CD4-positive, alpha-beta memory T cell (primary cell): ENCODE measurements at regions of chr3 and their contacts with region 1.

Region 1: DNA sequence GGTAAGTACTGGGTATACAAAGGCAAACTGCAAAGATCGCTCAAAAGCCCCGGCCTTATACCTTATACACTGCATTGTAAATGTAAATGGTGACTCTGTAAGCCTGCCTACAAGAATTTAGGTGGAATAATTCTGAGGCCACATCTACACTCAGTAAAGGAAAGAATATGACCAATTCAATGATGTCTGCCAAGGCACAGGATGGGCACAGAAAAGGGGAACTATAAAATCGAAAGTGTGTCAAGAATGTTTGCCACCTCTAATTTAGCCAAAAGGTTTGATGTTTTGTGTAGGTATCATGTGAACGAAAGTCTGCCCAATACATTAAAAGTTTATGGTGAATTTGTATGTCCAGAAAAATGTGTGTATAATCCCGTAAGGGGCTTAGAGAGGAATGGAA is 96.1 kb downstream of the FOXP1 start:
- DNase-seq: no peak
- H3K4me3 ChIP-seq: peak overlapping the region in 1 of 2 donors; percentile 34
- H3K4me3 Mint-ChIP-seq: peak overlapping the region; percentile 80 to 91 (median 86)
- H3K27ac ChIP-seq: peak overlapping the region; percentile 69
- H3K27ac Mint-ChIP-seq: peak overlapping the region; percentile 86 to 97 (median 96)
- H3K4me1 ChIP-seq: peaks cover 96% of the 10 kb centered on the region
- H3K4me1 Mint-ChIP-seq: peaks cover 51 to 92% (median 73%) of the 10 kb centered on the region in 4 donors
- H3K27me3 ChIP-seq: no peaks in the 10 kb centered on the region
- H3K27me3 Mint-ChIP-seq: no peaks in the 10 kb centered on the region

Region 2: GRCh38 chr3:71456156-71456555 is 31.3 kb before region 1 on chr3:
- CTCF ChIA-PET with region 1: interaction called, 10 read pairs
- POLR2A ChIA-PET with region 1: interaction called, 60 read pairs
- intact Hi-C with region 1: loop called (anchors 2 kb)
- DNase-seq: peak in 4 of 5 donors; percentile 40 to 47 (median 44)
- H3K4me3 ChIP-seq: peak overlapping the region; percentile 15 to 30
- H3K4me3 Mint-ChIP-seq: peak overlapping the region; percentile 59 to 91 (median 84)
- H3K27ac ChIP-seq: peak overlapping the region; percentile 67
- H3K27ac Mint-ChIP-seq: peak overlapping the region; percentile 93 to 98 (median 96)
- H3K4me1 ChIP-seq: peaks cover 89% of the 10 kb centered on the region
- H3K4me1 Mint-ChIP-seq: peaks cover 80 to 98% (median 86%) of the 10 kb centered on the region in 4 donors
- H3K27me3 ChIP-seq: no peaks in the 10 kb centered on the region
- H3K27me3 Mint-ChIP-seq: no peaks in the 10 kb centered on the region

Region 3: DNA sequence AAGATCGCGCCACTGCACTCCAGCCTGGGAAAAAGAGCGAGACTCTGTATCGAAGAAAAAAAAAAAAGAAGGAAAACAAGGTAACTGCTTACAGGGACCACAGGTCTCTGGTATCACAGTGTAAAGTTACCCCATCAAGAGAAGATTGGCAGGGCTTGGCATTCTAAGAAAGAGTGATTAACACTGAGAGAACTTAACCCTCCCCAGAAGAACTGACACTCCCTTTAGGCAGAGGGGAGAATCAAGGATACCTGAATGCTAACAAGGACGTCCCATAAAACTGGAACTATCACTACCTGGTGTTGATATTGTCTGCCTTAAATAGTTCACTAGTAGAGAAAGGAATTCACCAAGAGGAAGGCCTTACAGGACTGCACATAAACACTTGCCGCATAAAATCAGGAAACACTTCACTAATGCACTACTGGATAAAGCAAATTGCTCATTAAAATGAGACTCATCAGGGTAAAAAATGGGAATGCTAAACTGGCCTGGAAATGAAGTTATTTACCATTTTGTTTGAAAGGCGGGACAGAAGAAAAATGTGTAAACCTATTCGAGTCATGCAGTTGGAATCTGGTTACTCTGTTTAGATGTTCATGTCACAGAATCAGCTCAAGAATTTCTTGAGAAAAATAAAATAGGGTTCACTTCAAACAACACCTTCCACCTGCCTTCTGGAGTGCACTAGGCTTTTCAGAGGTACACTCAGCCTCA is 25.5 kb before region 1 on chr3:
- CTCF ChIA-PET with region 1: interaction called, 8 read pairs
- POLR2A ChIA-PET with region 1: interaction called, 13 read pairs
- intact Hi-C with region 1: loop called (anchors 2 kb)
- DNase-seq: no peak
- H3K4me3 ChIP-seq: no peak overlapping the region
- H3K4me3 Mint-ChIP-seq: peak overlapping the region in 2 of 8 donors; percentile 38 to 39
- H3K27ac ChIP-seq: no peak overlapping the region
- H3K27ac Mint-ChIP-seq: peak overlapping the region; percentile 7 to 90 (median 67)
- H3K4me1 ChIP-seq: peaks cover 38% of the 10 kb centered on the region
- H3K4me1 Mint-ChIP-seq: peaks cover 49 to 84% (median 64%) of the 10 kb centered on the region in 4 donors
- H3K27me3 ChIP-seq: no peaks in the 10 kb centered on the region
- H3K27me3 Mint-ChIP-seq: no peaks in the 10 kb centered on the region

Region 4: DNA sequence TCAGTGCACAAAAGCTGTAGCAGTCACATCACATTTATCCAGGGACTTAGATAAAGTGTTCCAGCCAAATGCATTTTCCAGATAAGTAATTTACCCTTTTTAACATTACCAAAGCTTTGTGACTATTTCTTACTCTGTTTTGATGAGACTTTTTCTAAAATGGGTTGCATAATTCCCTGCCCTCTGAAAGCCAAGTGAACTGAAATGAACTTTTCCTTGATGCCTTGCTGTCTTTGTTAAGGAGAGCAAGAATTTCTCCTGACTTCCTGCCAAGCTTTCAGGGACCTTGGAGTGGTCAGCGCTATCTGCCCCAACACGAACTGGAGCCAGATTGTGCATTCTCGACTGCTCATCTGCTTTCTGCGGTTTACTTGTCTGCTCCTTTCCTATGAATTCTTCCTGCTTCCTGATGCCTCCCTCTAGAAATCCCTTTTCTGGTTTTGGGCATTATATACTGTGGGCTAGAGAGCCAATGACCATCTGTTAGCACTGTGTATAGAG is 203.0 kb after region 1 on chr3:
- CTCF ChIA-PET with region 1: no interaction called
- POLR2A ChIA-PET with region 1: no interaction called
- intact Hi-C with region 1: no loop called
- DNase-seq: no peak
- H3K4me3 ChIP-seq: no peak overlapping the region
- H3K4me3 Mint-ChIP-seq: no peak overlapping the region
- H3K27ac ChIP-seq: no peak overlapping the region
- H3K27ac Mint-ChIP-seq: peak overlapping the region in 2 of 7 donors; percentile 6 to 72
- H3K4me1 ChIP-seq: no peaks in the 10 kb centered on the region
- H3K4me1 Mint-ChIP-seq: peaks cover 8 to 20% (median 14%) of the 10 kb centered on the region in 4 donors
- H3K27me3 ChIP-seq: no peaks in the 10 kb centered on the region
- H3K27me3 Mint-ChIP-seq: no peaks in the 10 kb centered on the region